Panc1 (cell line): ENCODE measurements at regions of chr1 and their contacts with region 1.

Region 1: DNA sequence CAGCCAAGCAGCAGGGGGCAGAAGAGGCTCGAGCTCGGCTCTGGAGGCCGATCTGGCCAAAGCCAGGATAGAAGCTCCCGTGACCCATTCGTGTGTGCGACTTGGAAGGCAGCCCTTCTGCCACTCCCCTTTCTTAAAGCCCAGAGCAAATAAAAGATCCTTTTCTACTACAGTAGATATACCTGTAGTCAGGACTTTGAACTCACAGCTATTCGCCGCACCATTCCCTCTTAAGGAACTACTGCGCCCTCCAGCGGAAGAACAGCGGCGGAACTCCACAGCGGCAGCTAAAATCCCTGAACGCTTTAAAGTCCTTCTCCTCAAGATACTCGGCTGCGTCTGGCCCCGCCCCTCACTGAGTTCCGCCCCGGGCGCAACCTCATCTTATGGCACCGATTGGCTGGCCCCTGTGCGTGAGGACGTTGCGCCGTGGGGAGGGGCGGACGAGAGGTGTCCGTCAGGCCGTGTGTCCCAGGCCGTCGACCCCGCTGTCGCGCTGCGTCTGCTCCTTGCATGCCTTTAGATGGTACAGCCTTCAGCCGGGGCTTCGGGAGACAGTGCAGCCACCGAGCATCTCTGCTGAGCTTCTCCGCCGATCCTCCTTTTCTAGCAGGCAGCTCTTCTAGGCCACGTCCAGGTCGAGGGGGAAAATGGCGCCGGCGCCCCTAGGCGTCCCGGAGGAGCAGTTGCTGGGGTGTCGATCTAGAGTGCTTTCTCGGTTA is at the start of gene LRIG2:
- DNase-seq: peak; percentile 91
- ATAC-seq: peak; percentile 99
- H3K4me3 ChIP-seq: peak within 1 kb of the TSS; percentile 86 to 88
- H3K27ac ChIP-seq: peak within 1 kb of the TSS; percentile 81
- H3K4me1 ChIP-seq: peaks cover 9% of the 10 kb centered on the region
- H3K27me3 ChIP-seq: no peaks in the 10 kb centered on the region
- CTCF ChIP-seq: peak; percentile 92
- total RNA-seq, gene LRIG2: 8.9 TPM

Region 2: GRCh38 chr1:112882271-112882744 is 190.6 kb before region 1 on chr1:
- CTCF ChIA-PET with region 1: interaction called, 10 read pairs
- POLR2A ChIA-PET with region 1: no interaction called
- in situ Hi-C with region 1: no loop called
- intact Hi-C with region 1: no loop called
- DNase-seq: no peak
- ATAC-seq: no peak
- H3K4me3 ChIP-seq: no peak overlapping the region
- H3K27ac ChIP-seq: no peak overlapping the region
- H3K4me1 ChIP-seq: no peaks in the 10 kb centered on the region
- H3K27me3 ChIP-seq: no peaks in the 10 kb centered on the region
- CTCF ChIP-seq: no peak

Region 3: DNA sequence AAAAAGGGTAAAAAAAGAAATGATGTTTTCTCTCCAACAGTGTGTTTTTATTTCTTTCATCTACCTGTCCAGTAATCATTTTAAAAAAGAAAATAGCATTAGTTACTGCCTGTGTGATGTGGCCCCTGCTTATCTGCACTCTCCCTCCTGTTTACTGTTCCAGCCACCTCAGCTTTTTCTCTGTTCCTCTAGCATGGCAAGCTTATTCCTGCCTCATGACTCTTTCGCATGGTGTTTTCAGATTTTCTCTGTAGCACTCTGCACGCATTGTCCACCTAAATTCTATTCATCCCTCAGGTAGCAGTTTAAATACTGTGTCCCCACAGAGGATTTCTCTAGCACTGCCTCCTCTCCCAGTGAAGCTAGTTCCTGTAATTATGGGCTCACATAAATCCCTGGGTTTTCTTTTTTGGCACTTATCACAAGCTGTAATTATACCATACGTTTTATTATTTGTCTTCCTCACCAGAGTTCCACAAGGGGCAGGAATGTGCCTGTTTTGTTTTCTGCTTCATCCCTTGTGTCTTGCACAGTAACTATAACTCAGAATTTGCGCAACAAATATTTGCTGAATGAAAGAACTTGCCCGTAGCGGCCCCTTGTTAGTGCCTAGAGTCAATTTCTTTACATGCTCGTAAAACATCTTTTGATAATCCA is 51.4 kb before region 1 on chr1:
- CTCF ChIA-PET with region 1: interaction called, 11 read pairs
- POLR2A ChIA-PET with region 1: no interaction called
- in situ Hi-C with region 1: no loop called
- intact Hi-C with region 1: no loop called
- DNase-seq: no peak
- ATAC-seq: no peak
- H3K4me3 ChIP-seq: no peak overlapping the region
- H3K27ac ChIP-seq: no peak overlapping the region
- H3K4me1 ChIP-seq: no peaks in the 10 kb centered on the region
- H3K27me3 ChIP-seq: no peaks in the 10 kb centered on the region
- CTCF ChIP-seq: no peak